Caco-2 (cell line): ENCODE measurements at regions of chr22 and their contacts with region 1.

Region 1: GRCh38 chr22:23938328-23939016 is 22.5 kb downstream of the GSTT2B start:
- DNase-seq: peak; percentile 68 to 81
- H3K4me3 ChIP-seq: no peak overlapping the region
- H3K4me3 Mint-ChIP-seq: peak overlapping the region; percentile 40
- H3K27ac Mint-ChIP-seq: peak overlapping the region; percentile 88
- H3K4me1 ChIP-seq: peaks cover 16% of the 10 kb centered on the region
- H3K4me1 Mint-ChIP-seq: peaks cover 13% of the 10 kb centered on the region
- H3K27me3 ChIP-seq: no peaks in the 10 kb centered on the region
- H3K27me3 Mint-ChIP-seq: no peaks in the 10 kb centered on the region
- CTCF ChIP-seq: no peak

Region 2: GRCh38 chr22:23893943-23894709 is 44.3 kb before region 1 on chr22 and contains the start of gene MIF:
- CTCF ChIA-PET with region 1: interaction called, 13 read pairs
- POLR2A ChIA-PET with region 1: interaction called, 26 read pairs
- intact Hi-C with region 1: loop called (anchors 2 kb)
- DNase-seq: peak; percentile 97 to 99
- H3K4me3 ChIP-seq: peak within 1 kb of the TSS; percentile 84
- H3K4me3 Mint-ChIP-seq: peak within 1 kb of the TSS; percentile 94
- H3K27ac Mint-ChIP-seq: peak within 1 kb of the TSS; percentile 98
- H3K4me1 ChIP-seq: peaks cover 19% of the 10 kb centered on the region
- H3K4me1 Mint-ChIP-seq: peaks cover 13% of the 10 kb centered on the region
- H3K27me3 ChIP-seq: no peaks in the 10 kb centered on the region
- H3K27me3 Mint-ChIP-seq: no peaks in the 10 kb centered on the region
- CTCF ChIP-seq: peak; percentile 83 to 85
- total RNA-seq, gene MIF: 762 and 795 TPM in 2 replicates

Region 3: GRCh38 chr22:23913661-23914353 is 24.7 kb before region 1 on chr22:
- CTCF ChIA-PET with region 1: interaction called, 10 read pairs
- POLR2A ChIA-PET with region 1: interaction called, 7 read pairs
- intact Hi-C with region 1: no loop called
- DNase-seq: peak; percentile 99
- H3K4me3 ChIP-seq: peak overlapping the region; percentile 51
- H3K4me3 Mint-ChIP-seq: peak overlapping the region; percentile 85
- H3K27ac Mint-ChIP-seq: peak overlapping the region; percentile 87
- H3K4me1 ChIP-seq: peaks cover 27% of the 10 kb centered on the region
- H3K4me1 Mint-ChIP-seq: peaks cover 16% of the 10 kb centered on the region
- H3K27me3 ChIP-seq: no peaks in the 10 kb centered on the region
- H3K27me3 Mint-ChIP-seq: no peaks in the 10 kb centered on the region
- CTCF ChIP-seq: no peak

Region 4: GRCh38 chr22:24011735-24012068 is 73.2 kb after region 1 on chr22:
- CTCF ChIA-PET with region 1: no interaction called
- POLR2A ChIA-PET with region 1: no interaction called
- intact Hi-C with region 1: no loop called
- DNase-seq: peak in 1 of 2 experiments; percentile 49
- H3K4me3 ChIP-seq: peak overlapping the region; percentile 93
- H3K4me3 Mint-ChIP-seq: peak overlapping the region; percentile 92
- H3K27ac Mint-ChIP-seq: peak overlapping the region; percentile 93
- H3K4me1 ChIP-seq: peaks cover 26% of the 10 kb centered on the region
- H3K4me1 Mint-ChIP-seq: peaks cover 33% of the 10 kb centered on the region
- H3K27me3 ChIP-seq: no peaks in the 10 kb centered on the region
- H3K27me3 Mint-ChIP-seq: no peaks in the 10 kb centered on the region
- CTCF ChIP-seq: no peak

Region 5: GRCh38 chr22:24037851-24038765 is 99.6 kb after region 1 on chr22:
- CTCF ChIA-PET with region 1: no interaction called
- POLR2A ChIA-PET with region 1: no interaction called
- intact Hi-C with region 1: no loop called
- DNase-seq: no peak
- H3K4me3 ChIP-seq: no peak overlapping the region
- H3K4me3 Mint-ChIP-seq: no peak overlapping the region
- H3K27ac Mint-ChIP-seq: no peak overlapping the region
- H3K4me1 ChIP-seq: peaks cover 10% of the 10 kb centered on the region; the same call in 1 of the 2 replicates
- H3K4me1 Mint-ChIP-seq: peaks cover 7% of the 10 kb centered on the region
- H3K27me3 ChIP-seq: no peaks in the 10 kb centered on the region
- H3K27me3 Mint-ChIP-seq: no peaks in the 10 kb centered on the region
- CTCF ChIP-seq: no peak